T-cell (primary cell): ENCODE measurements at regions of chr2 and their contacts with region 1.

Region 1: GRCh38 chr2:191070276-191070675 is 56.3 kb upstream of the STAT1 start:
- DNase-seq: no peak
- ATAC-seq: peak in 3 of 4 experiments; percentile 19 to 23 (median 22)
- H3K4me3 ChIP-seq: no peak overlapping the region
- H3K4me3 Mint-ChIP-seq: peak overlapping the region in 2 of 3 donors; percentile 21 to 47
- H3K27ac ChIP-seq: peak overlapping the region; percentile 48
- H3K27ac Mint-ChIP-seq: peak overlapping the region; percentile 92 to 93
- H3K4me1 ChIP-seq: peaks cover 16 to 29% of the 10 kb centered on the region in 2 experiments
- H3K4me1 Mint-ChIP-seq: peaks cover 50 to 69% (median 60%) of the 10 kb centered on the region in 3 donors
- H3K27me3 ChIP-seq: no peaks in the 10 kb centered on the region
- H3K27me3 Mint-ChIP-seq: no peaks in the 10 kb centered on the region

Region 2: GRCh38 chr2:191001032-191001431 is 69.2 kb before region 1 on chr2:
- CTCF ChIA-PET with region 1: no interaction called
- POLR2A ChIA-PET with region 1: interaction called in 1 of 2 experiments, 10 read pairs
- DNase-seq: no peak
- ATAC-seq: no peak
- H3K4me3 ChIP-seq: no peak overlapping the region
- H3K4me3 Mint-ChIP-seq: no peak overlapping the region
- H3K27ac ChIP-seq: peak overlapping the region; percentile 5
- H3K27ac Mint-ChIP-seq: peak overlapping the region; percentile 30 to 82
- H3K4me1 ChIP-seq: peaks cover 0 to 8% of the 10 kb centered on the region in 2 experiments
- H3K4me1 Mint-ChIP-seq: peaks cover 69 to 94% (median 69%) of the 10 kb centered on the region in 3 donors
- H3K27me3 ChIP-seq: no peaks in the 10 kb centered on the region
- H3K27me3 Mint-ChIP-seq: no peaks in the 10 kb centered on the region

Region 3: DNA sequence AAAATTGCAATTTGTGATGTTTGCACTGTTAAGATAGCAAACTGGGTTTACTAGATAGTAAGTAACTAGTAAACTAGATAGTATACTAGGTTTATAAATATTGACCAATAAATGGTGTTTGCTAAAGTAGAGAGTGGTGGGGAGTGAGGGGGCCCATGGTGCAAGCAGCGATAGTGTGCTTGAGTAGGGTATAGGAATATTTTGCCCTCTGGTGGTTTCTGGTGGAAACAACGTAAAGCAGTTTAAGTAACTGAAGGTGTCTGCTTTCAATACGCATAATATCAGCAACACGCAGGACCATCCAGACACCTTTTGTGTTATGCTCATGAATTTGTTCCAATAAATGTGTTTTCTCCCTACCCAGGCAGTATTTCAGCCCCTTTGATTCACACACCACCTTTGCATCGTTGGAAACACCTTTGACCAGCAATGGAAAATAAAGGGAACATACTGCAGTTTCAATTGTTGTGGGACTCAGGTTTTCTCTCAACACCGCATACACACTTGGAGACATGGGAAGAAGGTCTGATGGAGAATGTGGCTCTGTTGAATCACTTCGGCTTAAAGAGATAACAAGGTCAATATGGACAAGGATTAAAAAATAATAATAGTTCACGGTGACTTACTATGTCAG is 39.6 kb before region 1 on chr2:
- CTCF ChIA-PET with region 1: no interaction called
- POLR2A ChIA-PET with region 1: no interaction called
- DNase-seq: peak in 13 of 35 experiments; percentile 9 to 79 (median 44)
- ATAC-seq: peak; percentile 74 to 84 (median 79)
- H3K4me3 ChIP-seq: no peak overlapping the region
- H3K4me3 Mint-ChIP-seq: no peak overlapping the region
- H3K27ac ChIP-seq: peak overlapping the region; percentile 70
- H3K27ac Mint-ChIP-seq: peak overlapping the region; percentile 81 to 87
- H3K4me1 ChIP-seq: peaks cover 17 to 26% of the 10 kb centered on the region in 2 experiments
- H3K4me1 Mint-ChIP-seq: peaks cover 35 to 46% (median 43%) of the 10 kb centered on the region in 3 donors
- H3K27me3 ChIP-seq: no peaks in the 10 kb centered on the region
- H3K27me3 Mint-ChIP-seq: no peaks in the 10 kb centered on the region

Region 4: DNA sequence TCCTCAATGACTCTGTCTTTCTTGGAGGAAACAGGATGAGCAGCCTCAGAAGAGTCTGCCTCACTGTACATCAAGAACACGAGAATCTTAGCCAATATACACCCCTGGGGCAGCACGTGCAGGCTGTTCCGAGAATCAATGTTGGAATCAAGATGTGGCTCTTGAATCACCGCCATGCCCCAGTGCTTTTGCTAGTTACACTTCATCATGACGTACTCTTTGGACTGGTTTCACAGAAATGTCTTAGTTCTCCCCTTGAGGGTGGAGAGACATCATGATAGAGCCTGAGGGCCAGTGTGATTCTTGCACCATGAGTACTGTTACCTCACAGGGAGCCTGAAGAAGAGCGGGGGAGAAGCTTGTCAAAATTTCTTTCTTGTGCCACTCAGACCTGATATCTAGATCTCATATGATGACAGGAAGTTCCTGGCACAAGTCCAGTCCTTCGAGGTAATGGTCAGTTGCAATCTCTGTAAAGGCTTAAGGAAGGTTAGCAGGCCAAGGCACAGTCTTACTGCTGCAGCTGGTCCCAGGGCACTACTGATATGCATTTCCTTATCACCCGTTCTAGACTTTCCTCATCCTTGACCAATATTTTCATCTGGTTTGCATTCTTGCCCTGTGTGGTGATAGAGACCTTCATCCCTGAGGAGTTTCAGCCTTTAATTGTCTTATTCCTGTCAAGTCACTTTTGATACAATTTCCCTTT is 108.7 kb after region 1 on chr2:
- CTCF ChIA-PET with region 1: no interaction called
- POLR2A ChIA-PET with region 1: no interaction called
- DNase-seq: no peak
- ATAC-seq: no peak
- H3K4me3 ChIP-seq: no peak overlapping the region
- H3K4me3 Mint-ChIP-seq: no peak overlapping the region
- H3K27ac ChIP-seq: no peak overlapping the region
- H3K27ac Mint-ChIP-seq: no peak overlapping the region
- H3K4me1 ChIP-seq: no peaks in the 10 kb centered on the region
- H3K4me1 Mint-ChIP-seq: peaks cover 6 to 8% (median 6%) of the 10 kb centered on the region in 3 donors
- H3K27me3 ChIP-seq: no peaks in the 10 kb centered on the region
- H3K27me3 Mint-ChIP-seq: no peaks in the 10 kb centered on the region